GM13976 (cell line): ENCODE measurements at regions of chr5 and their contacts with region 1.

Region 1: GRCh38 chr5:142151436-142152383 is 43.1 kb downstream of the NDFIP1 start:
- DNase-seq: peak; percentile 53
- CTCF ChIP-seq: peak; percentile 79

Region 2: GRCh38 chr5:142095651-142096330 is 55.9 kb before region 1 on chr5:
- in situ Hi-C with region 1: no loop called
- DNase-seq: no peak
- CTCF ChIP-seq: no peak

Region 3: DNA sequence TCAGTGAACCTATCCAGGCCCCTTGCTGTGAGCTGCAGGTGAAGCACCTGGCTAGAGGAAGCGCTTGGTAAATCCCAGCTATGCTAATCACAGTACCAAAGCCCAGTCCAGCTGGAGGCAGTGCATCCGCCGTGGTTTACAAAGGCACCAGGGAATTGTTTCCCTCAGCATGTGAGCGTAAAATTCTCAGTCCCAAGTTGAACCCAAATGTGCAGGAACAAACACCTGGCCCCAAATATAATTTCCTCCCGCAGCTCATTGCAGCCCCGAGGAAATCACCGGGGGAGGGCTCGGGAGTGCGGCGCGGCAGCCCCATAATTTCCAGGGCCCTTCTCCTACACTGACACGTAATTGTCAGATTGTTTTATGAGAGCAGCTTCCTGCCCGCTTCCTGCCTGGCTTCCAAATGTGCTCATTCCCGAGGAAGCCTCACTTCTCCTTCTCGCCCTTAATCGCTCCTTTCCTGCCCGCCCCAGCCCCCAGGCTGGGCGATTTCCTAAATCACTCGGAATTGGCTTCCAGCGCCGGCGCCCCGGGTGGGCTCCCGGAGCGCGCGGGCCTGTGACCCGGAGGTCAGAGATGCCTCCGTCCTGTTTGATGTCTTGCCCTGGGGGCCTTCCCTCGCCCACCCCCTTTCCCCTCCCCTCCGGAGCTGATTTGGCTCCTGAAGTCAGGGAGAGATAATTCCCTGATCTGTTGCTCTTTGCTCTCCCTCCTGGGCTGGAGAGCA is 399.8 kb after region 1 on chr5:
- in situ Hi-C with region 1: loop called (anchors 25 kb)
- DNase-seq: no peak
- CTCF ChIP-seq: no peak

Region 4: DNA sequence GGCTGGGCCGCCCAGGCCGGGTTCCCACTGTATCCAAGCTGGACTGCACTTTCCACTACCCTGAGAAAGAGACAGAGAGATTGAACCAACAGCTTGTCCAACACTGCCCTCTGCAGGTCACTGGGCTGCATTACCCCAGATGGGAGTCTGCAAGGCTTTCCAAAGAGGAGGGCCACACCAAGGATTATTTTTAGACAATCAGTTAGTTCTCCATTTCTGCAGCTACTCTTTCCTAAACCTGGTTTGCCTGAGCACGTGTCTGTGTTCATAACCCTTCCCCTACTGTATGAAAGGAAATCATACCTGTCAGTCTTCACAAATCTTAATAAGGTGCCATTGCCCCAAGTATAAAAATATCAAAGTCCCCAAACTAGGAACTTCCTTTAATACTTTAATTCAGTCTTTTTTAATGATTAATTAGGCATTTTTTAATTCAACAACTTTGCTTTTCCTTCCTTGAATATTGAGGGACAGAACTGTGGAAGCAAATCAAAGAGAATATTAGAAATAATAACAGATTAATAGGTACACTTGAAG is 547.5 kb after region 1 on chr5:
- in situ Hi-C with region 1: loop called (anchors 25 kb)
- DNase-seq: peak; percentile 66
- CTCF ChIP-seq: peak; percentile 89

Region 5: DNA sequence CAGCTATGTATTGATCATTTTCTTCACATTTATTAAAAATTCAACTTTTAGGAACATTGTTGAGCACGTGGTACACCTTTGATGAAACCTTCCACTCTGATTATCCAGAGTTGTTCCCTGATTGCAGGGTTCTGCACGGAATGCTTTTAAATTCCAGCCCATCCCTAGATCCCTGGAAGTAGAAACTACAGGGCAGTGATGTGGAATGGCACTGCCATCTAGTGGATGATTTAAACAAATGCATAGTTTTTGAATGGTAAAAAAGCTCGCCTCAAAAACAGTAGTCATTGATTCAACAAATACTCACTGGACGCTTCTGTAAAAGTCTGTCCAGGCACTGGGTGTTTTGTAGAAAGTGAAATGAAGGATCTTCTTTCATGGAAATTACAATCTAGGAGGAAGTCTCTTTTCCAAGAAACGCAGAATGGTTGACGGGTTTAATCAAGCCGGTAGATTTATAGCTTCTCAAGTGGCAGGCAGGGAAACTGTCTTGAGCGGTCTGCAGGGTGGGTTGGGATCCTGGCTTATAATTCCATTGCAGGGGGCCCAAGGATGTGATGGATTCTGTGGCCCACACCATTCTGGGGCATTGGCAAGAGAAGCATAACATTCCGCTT is 736.9 kb after region 1 on chr5:
- in situ Hi-C with region 1: loop called (anchors 25 kb)
- DNase-seq: peak; percentile 38
- CTCF ChIP-seq: peak; percentile 41